Gastrocnemius medialis (tissue), 4 donors: ENCODE measurements at regions of chr15 and their contacts with region 1.

Region 1: GRCh38 chr15:67303490-67304363 is 49.1 kb downstream of the IQCH start:
- DNase-seq: no peak
- ATAC-seq: peak; percentile 75 to 93
- H3K4me3 ChIP-seq: no peak overlapping the region
- H3K27ac ChIP-seq: no peak overlapping the region
- H3K4me1 ChIP-seq: no peaks in the 10 kb centered on the region
- H3K27me3 ChIP-seq: no peaks in the 10 kb centered on the region
- CTCF ChIP-seq: peak; percentile 56 to 69 (median 65)
- POLR2A ChIP-seq: no peak

Region 2: GRCh38 chr15:66946578-66947164 is 357.1 kb before region 1 on chr15:
- in situ Hi-C with region 1: loop called in 3 of 4 experiments (anchors 5 kb)
- intact Hi-C with region 1: loop called (anchors 1 kb)
- DNase-seq: peak; percentile 39 to 62
- ATAC-seq: peak; percentile 75 to 78
- H3K4me3 ChIP-seq: no peak overlapping the region
- H3K27ac ChIP-seq: no peak overlapping the region
- H3K4me1 ChIP-seq: no peaks in the 10 kb centered on the region
- H3K27me3 ChIP-seq: no peaks in the 10 kb centered on the region
- CTCF ChIP-seq: peak; percentile 88 to 95 (median 93)
- POLR2A ChIP-seq: no peak

Region 3: GRCh38 chr15:66955871-66956585 is 347.7 kb before region 1 on chr15:
- in situ Hi-C with region 1: loop called in 2 of 4 experiments (anchors 5 kb)
- intact Hi-C with region 1: no loop called
- DNase-seq: no peak
- ATAC-seq: no peak
- H3K4me3 ChIP-seq: no peak overlapping the region
- H3K27ac ChIP-seq: no peak overlapping the region
- H3K4me1 ChIP-seq: no peaks in the 10 kb centered on the region
- H3K27me3 ChIP-seq: no peaks in the 10 kb centered on the region
- CTCF ChIP-seq: no peak
- POLR2A ChIP-seq: no peak

Region 4: DNA sequence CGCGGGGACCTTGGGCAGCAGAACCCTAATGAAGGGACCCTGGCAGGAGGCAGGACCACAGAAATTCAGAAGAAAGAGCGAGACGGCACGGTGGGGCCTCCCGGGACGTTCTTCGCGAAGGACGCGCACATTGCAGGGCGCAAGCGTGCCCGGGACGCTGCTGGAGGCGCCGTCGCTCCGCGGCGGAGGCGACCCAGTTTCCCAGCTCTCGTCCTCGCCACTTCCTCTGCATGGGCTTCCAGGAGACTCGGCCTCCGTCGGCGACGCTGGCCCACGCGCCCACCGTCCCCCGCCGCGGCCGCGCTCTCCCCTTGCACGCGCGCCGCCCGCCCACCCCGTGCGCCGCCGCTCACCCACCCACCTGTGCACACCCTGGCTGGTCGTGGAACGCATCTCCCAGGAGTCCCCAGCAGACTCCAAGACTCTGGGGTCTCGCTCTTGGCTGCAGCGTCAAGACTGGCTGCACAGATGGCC is 270.1 kb before region 1 on chr15:
- in situ Hi-C with region 1: no loop called
- intact Hi-C with region 1: loop called (anchors 10 kb)
- DNase-seq: no peak
- ATAC-seq: peak; percentile 46 to 66
- H3K4me3 ChIP-seq: peak overlapping the region; percentile 34 to 45 (median 40)
- H3K27ac ChIP-seq: no peak overlapping the region
- H3K4me1 ChIP-seq: peaks cover 3 to 10% of the 10 kb centered on the region in 2 donors
- H3K27me3 ChIP-seq: no peaks in the 10 kb centered on the region
- CTCF ChIP-seq: peak in 2 of 5 experiments; percentile 16 to 41
- POLR2A ChIP-seq: no peak

Region 5: GRCh38 chr15:67240235-67241131 is 63.2 kb before region 1 on chr15:
- in situ Hi-C with region 1: no loop called
- intact Hi-C with region 1: loop called (anchors 2 kb)
- DNase-seq: peak in 1 of 2 donors; percentile 9
- ATAC-seq: peak; percentile 59
- H3K4me3 ChIP-seq: no peak overlapping the region
- H3K27ac ChIP-seq: peak overlapping the region in 2 of 4 donors; percentile 55 to 56
- H3K4me1 ChIP-seq: peaks cover 30 to 41% of the 10 kb centered on the region in 2 donors
- H3K27me3 ChIP-seq: no peaks in the 10 kb centered on the region
- CTCF ChIP-seq: peak in 4 of 5 experiments; percentile 20 to 35 (median 29)
- POLR2A ChIP-seq: no peak